Posterior vena cava (tissue), 2 donors: ENCODE measurements at regions of chr9 and their contacts with region 1.

Region 1: GRCh38 chr9:34948451-34948850 is 9.6 kb upstream of the PHF24 start:
- DNase-seq: no peak

Region 2: GRCh38 chr9:34310205-34310604 is 638.2 kb before region 1 on chr9:
- intact Hi-C with region 1: no loop called
- DNase-seq: no peak

Region 3: DNA sequence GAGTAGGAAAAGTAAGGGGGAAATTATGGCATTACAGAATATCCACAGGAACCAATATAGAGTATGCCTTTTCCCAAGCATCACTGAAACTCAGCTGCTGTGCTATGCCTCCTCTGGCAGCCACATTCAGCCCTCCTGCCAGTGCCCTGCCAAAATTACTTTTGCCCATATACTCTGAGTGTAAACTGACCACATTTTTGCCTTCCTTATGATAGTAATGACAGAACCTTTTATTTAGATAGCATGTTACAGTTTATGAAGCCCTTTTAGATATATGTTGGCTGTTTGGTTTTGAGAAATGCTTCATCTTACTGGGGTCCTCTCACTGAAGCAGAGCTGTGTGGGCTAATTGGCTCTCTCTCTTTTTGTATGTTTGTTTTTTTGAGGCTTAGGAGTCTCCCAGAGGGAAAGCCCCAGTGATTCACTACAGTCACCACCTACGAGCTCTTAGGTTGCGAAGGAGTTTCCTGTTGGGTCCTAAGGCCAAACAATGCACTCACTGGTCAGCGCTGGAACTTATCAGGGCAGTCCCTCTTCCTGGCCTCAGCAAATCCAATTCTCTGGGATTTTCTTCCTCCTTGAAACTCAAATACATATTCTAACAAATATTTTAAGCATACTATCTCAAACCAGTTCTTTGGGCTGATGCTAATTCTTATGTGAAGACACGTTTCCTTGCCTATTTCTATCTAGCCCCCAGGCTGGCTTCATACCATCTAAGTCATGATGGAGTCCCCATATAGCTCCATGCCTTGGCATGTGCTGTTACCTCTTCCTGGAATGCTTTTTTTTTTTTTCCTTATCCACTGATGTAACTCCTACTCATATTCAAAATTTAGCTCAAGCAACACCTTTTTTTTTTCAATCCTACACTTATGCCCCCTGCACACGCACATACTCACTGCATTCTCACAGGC is 13.4 kb after region 1 on chr9:
- intact Hi-C with region 1: loop called in 1 of 2 experiments (anchors 2 kb)
- DNase-seq: no peak